Activated T-helper 1 cell treated with anti-CD3 and anti-CD28 coated beads, Interleukin-12 subunit alpha, Interleukin-12 subunit beta, Interleukin-2, Interleukin-4 antibody, amounts not matched to agents 30 ng/mL and 10 ng/mL and 1 ng/mL, durations not matched to agents 14 hours and 24 hours and 36 hours (primary cell): ENCODE measurements at regions of chrX and their contacts with region 1.

Region 1: GRCh38 chrX:9708904-9709553 is 56.6 kb downstream of the GPR143 start:
- DNase-seq: peak; percentile 62
- H3K4me3 Mint-ChIP-seq: no peak overlapping the region
- H3K27ac Mint-ChIP-seq: no peak overlapping the region
- H3K4me1 Mint-ChIP-seq: peaks cover 8% of the 10 kb centered on the region
- H3K27me3 Mint-ChIP-seq: no peaks in the 10 kb centered on the region

Region 2: DNA sequence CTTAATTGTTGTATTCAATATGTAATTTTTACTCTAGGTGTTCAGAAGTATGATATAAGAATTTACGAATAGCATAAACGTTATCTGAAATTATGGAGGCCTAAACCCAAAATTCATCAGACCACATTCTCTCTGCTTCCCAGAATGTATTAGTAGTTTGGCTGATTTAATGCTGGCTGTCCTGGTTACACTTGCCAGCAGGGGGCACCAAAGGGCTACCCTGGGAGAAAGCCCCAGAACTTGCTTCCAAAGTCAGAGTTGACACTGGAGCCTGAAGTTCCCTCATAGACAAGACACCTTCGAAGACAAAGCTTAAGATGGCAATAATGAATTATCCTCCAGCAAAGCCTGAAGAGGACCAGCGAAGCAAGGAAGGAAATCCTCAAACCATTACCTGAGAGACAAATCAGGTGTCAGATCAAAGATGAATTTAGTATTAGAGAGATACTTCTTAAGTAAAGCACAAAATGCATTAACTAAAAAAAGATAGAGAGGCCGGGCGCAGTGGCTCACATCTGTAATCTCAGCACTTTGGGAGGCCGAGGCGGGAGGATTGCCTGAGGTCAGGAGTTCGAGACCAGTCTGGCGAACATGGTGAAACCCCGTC is 965.8 kb before region 1 on chrX:
- intact Hi-C with region 1: loop called (anchors 1 kb)
- DNase-seq: peak; percentile 9
- H3K4me3 Mint-ChIP-seq: no peak overlapping the region
- H3K27ac Mint-ChIP-seq: no peak overlapping the region
- H3K4me1 Mint-ChIP-seq: no peaks in the 10 kb centered on the region
- H3K27me3 Mint-ChIP-seq: no peaks in the 10 kb centered on the region

Region 3: DNA sequence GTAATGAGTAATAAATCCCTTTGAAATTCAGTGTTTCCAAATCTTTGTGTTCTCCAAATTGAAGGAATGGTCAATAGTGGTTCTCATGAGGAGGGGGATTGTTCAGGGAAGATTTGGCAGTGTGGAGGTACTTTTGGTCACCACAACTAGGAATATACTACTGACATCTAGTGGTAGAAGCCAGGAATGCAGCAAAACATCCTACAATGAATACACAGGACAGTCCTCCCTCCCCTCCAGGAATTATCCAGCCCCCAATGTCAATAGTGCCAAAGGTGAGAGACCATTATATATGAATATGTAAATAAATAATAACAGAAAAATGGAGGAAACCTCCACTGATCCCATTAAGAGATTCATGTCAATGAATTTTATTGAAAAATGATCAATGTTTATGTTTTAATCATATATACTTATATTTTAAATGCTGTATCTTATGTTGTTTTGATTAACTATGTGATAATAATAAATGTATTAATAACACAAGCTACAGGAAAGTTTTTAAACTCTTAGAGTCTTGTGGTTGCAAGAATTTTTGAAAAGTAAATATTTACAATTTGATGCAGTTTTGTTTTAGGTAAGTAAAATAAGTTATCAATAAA is 893.5 kb before region 1 on chrX:
- intact Hi-C with region 1: loop called (anchors 2 kb)
- DNase-seq: peak; percentile 3
- H3K4me3 Mint-ChIP-seq: no peak overlapping the region
- H3K27ac Mint-ChIP-seq: no peak overlapping the region
- H3K4me1 Mint-ChIP-seq: no peaks in the 10 kb centered on the region
- H3K27me3 Mint-ChIP-seq: peaks cover 3% of the 10 kb centered on the region

Region 4: DNA sequence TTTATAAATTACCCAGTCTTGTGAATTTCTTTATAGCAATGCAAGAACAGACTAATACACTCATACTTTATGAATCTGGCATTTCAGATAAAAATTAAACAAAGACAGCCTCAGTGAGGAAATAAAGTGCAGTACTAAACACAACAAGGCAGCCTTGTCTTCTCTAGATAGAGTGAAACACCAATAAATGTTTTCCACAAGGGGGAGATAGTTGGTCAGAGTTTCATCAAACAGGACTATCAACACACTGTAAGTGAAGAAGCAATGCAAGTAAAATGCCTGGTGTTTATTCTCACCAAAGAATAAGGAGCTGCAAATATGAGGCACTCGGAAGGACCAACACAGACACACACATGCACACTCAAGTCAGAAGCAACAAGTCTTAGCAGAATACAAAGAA is 737.9 kb before region 1 on chrX:
- intact Hi-C with region 1: loop called (anchors 1 kb)
- DNase-seq: no peak
- H3K4me3 Mint-ChIP-seq: no peak overlapping the region
- H3K27ac Mint-ChIP-seq: no peak overlapping the region
- H3K4me1 Mint-ChIP-seq: peaks cover 6% of the 10 kb centered on the region
- H3K27me3 Mint-ChIP-seq: peaks cover 2% of the 10 kb centered on the region

Region 5: GRCh38 chrX:9604111-9604907 is 104.7 kb before region 1 on chrX:
- intact Hi-C with region 1: no loop called
- DNase-seq: no peak
- H3K4me3 Mint-ChIP-seq: no peak overlapping the region
- H3K27ac Mint-ChIP-seq: no peak overlapping the region
- H3K4me1 Mint-ChIP-seq: no peaks in the 10 kb centered on the region
- H3K27me3 Mint-ChIP-seq: no peaks in the 10 kb centered on the region

Region 6: GRCh38 chrX:9724713-9725112 is 15.7 kb after region 1 on chrX:
- intact Hi-C with region 1: no loop called
- DNase-seq: no peak
- H3K4me3 Mint-ChIP-seq: no peak overlapping the region
- H3K27ac Mint-ChIP-seq: no peak overlapping the region
- H3K4me1 Mint-ChIP-seq: no peaks in the 10 kb centered on the region
- H3K27me3 Mint-ChIP-seq: no peaks in the 10 kb centered on the region